ENCODE measurements at regions of chr19 and their contacts with region 1.

Region 1: DNA sequence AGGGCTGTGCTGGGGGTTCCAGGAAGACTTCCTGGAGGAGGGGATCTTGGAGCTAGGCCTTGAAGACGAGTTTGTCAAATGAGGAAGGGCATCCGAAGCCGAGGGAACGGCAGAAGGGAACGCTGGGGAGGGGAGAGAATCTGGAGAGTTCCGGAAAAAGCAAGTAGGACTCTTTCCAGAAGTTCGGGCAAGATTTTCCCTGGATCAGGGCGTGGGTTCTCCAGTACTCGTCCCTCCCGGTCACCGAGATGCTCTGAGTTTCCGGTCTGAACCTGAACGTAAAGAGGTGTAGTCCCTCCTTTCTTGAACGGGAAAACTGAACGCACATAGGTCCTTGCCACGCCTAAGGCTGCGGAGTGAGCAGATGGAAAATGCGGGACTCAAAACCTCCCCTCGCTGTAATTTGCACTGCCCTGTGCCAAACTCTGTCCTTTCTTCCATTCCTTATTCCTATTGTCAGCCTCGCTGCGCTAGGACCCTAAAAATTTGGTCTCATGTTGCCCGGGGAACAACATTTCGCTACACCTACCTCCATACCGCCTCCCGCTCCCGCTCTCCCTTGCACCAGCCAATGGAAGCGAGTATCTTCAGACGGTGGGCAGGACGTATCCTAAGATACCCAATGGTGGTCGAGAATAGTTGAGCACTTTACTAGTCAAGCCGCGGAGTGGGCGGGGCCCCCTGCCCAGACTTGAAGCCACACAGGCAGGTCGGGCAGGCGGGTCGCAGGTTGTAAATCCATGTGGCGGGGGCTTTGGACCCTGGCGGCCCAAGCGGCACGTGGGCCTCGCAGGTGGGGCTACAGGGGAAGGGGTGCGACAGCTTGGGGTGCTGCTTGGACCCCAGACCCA is at the start of gene GTPBP3:
- H3K4me3 ChIP-seq: peak within 1 kb of the TSS; percentile 74
- H3K27ac ChIP-seq: peak within 1 kb of the TSS; percentile 63
- H3K4me1 ChIP-seq: peaks cover 8% of the 10 kb centered on the region
- CTCF ChIP-seq: peak; percentile 8; the same call in 1 of the 2 replicates

Region 2: GRCh38 chr19:17322854-17323253 is 14.2 kb before region 1 on chr19:
- CTCF ChIA-PET with region 1: interaction called, 7 read pairs
- POLR2A ChIA-PET with region 1: interaction called, 15 read pairs
- H3K4me3 ChIP-seq: no peak overlapping the region
- H3K27ac ChIP-seq: no peak overlapping the region
- H3K4me1 ChIP-seq: no peaks in the 10 kb centered on the region
- CTCF ChIP-seq: no peak

Measured in HEK293 (cell line).